ENCODE measurements at regions of chr2 and their contacts with region 1.

Region 1: DNA sequence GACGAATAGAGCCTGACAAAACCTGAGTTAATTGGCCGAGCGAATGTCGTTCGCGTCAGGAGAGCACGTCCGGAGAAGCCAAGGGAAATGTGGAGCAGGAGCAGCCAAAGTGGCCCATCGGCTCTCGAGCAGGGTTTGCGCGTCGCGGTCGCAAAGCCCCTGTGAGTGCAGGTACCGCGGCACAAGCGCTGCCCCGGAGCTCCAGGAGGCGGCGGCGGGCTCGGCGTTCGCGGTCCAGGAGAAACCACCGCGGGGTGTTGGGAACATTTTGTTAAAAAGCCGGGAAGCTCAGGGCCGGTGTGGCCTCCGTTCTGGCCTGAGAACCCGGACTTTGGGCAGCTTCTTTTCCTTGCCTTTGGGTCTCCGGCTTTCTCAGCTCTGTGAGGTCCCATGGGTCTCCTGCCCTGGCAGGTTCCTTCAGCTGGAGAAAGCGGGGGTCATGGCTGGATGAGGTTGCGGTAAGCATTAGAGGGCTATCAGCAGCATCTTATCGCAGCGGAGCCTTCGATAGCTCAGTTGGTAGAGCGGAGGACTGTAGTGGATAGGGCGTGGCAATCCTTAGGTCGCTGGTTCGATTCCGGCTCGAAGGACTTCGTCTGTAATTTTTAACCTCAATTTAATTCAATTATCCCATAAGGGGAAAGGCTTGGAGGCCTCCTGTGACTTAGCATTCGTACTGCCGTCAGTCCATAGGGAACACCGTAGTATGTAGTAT is 1.0 kb upstream of the AGBL5 start:
- DNase-seq: peak; percentile 92
- H3K4me3 ChIP-seq: peak overlapping the region; percentile 97 to 98
- H3K27ac ChIP-seq: peak overlapping the region; percentile 85 to 90
- H3K4me1 ChIP-seq: peaks cover 6% of the 10 kb centered on the region
- H3K27me3 ChIP-seq: no peaks in the 10 kb centered on the region
- CTCF ChIP-seq: peak in 2 of 4 experiments; percentile 52 to 68
- POLR2A ChIP-seq: no peak

Region 2: DNA sequence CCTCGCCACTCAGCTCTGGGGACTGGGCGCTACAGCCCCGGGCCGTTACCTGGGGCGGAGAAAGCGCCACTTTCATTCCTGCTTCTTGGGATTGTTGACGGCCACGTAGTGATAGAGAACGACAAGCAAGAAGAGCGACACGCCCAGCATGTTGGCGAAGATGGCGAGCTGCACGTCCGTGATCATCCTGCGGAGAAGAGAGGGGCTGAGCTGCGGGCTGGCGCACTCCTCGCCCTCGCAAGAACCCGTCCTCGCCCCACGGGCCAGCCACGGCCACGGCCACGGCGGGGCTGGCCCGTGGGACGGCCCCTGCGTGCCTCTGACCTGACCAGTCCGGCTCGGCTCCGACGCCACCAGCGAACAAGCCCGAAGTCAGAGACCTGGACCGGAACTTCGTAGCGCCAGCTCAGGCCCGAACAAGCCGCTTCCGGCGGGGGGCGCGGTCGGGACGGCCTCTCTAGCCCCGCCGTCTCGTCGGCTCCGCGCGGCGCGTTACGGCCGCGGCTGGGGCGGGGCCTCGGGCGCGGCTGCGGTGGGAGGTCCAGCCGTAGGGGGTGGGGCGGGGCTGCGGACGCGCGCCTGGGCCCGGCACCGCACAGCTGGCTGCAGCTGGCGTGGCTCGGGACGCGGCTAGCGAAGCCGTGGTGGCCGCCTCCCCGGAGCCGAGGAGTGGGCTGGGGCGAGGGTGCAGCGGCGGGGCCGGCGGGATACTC is 21.0 kb after region 1 on chr2 and contains the start of gene OST4:
- intact Hi-C with region 1: loop called (anchors 2 kb)
- DNase-seq: peak; percentile 94
- H3K4me3 ChIP-seq: peak within 1 kb of the TSS; percentile 71 to 98
- H3K27ac ChIP-seq: peak within 1 kb of the TSS; percentile 86 to 93
- H3K4me1 ChIP-seq: no peaks in the 10 kb centered on the region
- H3K27me3 ChIP-seq: no peaks in the 10 kb centered on the region
- CTCF ChIP-seq: peak in 3 of 4 experiments; percentile 7 to 30 (median 29)
- POLR2A ChIP-seq: peak; percentile 81
- total RNA-seq, gene OST4: 246 to 317 TPM

Region 3: GRCh38 chr2:27078267-27079194 is 28.1 kb after region 1 on chr2 and contains the start of gene EMILIN1:
- intact Hi-C with region 1: loop called (anchors 2 kb)
- DNase-seq: no peak
- H3K4me3 ChIP-seq: peak within 1 kb of the TSS; percentile 29 to 35
- H3K27ac ChIP-seq: peak within 1 kb of the TSS; percentile 75 to 82
- H3K4me1 ChIP-seq: peaks cover 7% of the 10 kb centered on the region
- H3K27me3 ChIP-seq: no peaks in the 10 kb centered on the region
- CTCF ChIP-seq: no peak
- POLR2A ChIP-seq: no peak
- total RNA-seq, gene EMILIN1: 39.8 to 149 TPM

Measured in prostate gland (tissue), 2 donors.